Activated CD8-positive, alpha-beta memory T cell treated with anti-CD3 and anti-CD28 coated beads, Interleukin-2, amount 10 ng/mL, durations not matched to agents 7 days and 5 days (primary cell): ENCODE measurements at regions of chr6 and their contacts with region 1.

Region 1: DNA sequence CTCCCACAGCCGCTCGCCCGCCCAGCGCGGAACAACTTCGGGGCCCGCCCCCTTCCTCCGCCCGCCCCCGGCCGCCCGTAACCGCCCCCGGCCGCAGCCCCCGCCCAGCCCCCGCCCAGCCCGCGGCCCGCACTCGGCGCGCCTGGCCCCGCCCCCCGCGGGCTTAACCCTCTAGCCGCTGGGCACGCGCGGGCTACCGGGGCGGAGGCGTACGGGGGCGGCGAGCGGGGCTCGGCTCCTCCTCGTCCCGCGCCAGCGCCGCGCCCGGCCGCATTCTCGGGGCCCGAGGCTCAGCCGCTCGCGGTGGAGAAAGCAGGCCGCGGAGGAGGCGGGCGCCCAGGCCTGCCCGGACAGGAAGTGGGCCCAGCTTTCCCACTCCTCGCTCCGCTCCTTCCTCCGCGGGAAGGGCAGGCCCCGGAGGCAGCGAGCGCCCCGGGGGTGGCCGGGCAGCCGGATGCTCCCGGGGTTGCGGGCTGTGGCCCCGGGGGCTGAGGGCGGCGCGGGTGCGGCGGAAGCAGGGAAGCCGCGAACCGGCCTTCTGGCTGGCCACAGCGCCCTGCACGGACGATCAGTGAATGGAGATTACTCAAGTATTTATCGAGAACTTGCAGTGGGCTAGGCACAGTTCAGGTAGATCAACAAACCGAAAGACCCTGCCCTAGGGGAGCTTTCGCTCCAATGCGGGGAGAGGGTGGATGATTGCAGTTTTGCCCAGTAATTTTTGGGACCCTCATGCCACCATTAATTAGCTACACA is at the start of gene TRAM2:
- DNase-seq: peak; percentile 67
- ATAC-seq: peak; percentile 75
- H3K4me3 Mint-ChIP-seq: peak within 1 kb of the TSS; percentile 72
- H3K27ac Mint-ChIP-seq: peak within 1 kb of the TSS; percentile 35
- H3K4me1 Mint-ChIP-seq: peaks cover 39% of the 10 kb centered on the region
- H3K27me3 Mint-ChIP-seq: peaks cover 36% of the 10 kb centered on the region
- total RNA-seq, gene TRAM2: 1.7 to 2.8 TPM

Region 2: GRCh38 chr6:52537001-52537753 is 40.0 kb before region 1 on chr6:
- CTCF ChIA-PET with region 1: interaction called, 26 read pairs
- DNase-seq: peak; percentile 63
- ATAC-seq: peak; percentile 34
- H3K4me3 Mint-ChIP-seq: peak overlapping the region; percentile 0
- H3K27ac Mint-ChIP-seq: peak overlapping the region; percentile 22
- H3K4me1 Mint-ChIP-seq: peaks cover 49% of the 10 kb centered on the region
- H3K27me3 Mint-ChIP-seq: peaks cover 8% of the 10 kb centered on the region

Region 3: GRCh38 chr6:52595000-52595795 is 18.0 kb after region 1 on chr6:
- CTCF ChIA-PET with region 1: interaction called, 17 read pairs
- DNase-seq: peak; percentile 37
- ATAC-seq: peak; percentile 41
- H3K4me3 Mint-ChIP-seq: no peak overlapping the region
- H3K27ac Mint-ChIP-seq: no peak overlapping the region
- H3K4me1 Mint-ChIP-seq: peaks cover 21% of the 10 kb centered on the region
- H3K27me3 Mint-ChIP-seq: peaks cover 4% of the 10 kb centered on the region

Region 4: DNA sequence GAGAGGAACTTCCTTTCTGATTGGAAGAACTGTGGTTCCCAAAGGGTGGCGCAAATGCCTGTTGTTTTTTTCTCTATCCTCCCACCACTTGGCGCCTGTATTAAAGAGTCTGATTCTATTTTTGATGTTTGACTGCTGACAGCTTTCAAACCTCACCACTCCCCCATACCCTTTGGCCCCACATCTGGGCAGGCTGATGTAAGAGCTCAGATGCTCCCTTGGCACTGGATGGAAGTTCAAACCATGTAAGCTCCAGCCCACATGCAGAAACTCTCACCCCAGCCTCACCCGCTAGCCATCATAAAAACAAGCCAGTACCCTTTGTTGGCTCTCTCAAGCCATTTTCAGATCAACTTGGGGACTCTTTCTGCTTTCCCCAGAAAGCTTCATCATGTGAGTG is 73.7 kb after region 1 on chr6:
- CTCF ChIA-PET with region 1: interaction called, 10 read pairs
- DNase-seq: no peak
- ATAC-seq: no peak
- H3K4me3 Mint-ChIP-seq: no peak overlapping the region
- H3K27ac Mint-ChIP-seq: no peak overlapping the region
- H3K4me1 Mint-ChIP-seq: peaks cover 8% of the 10 kb centered on the region
- H3K27me3 Mint-ChIP-seq: peaks cover 39% of the 10 kb centered on the region